CD4-positive, alpha-beta T cell (primary cell): ENCODE measurements at regions of chr19 and their contacts with region 1.

Region 1: GRCh38 chr19:14772467-14772866 is 5.9 kb downstream of the ADGRE2 start:
- DNase-seq: no peak
- ATAC-seq: no peak
- H3K4me3 ChIP-seq: no peak overlapping the region
- H3K4me3 Mint-ChIP-seq: no peak overlapping the region
- H3K27ac ChIP-seq: no peak overlapping the region
- H3K27ac Mint-ChIP-seq: no peak overlapping the region
- H3K4me1 ChIP-seq: peaks cover 17% of the 10 kb centered on the region
- H3K4me1 Mint-ChIP-seq: peaks cover 12% of the 10 kb centered on the region
- H3K27me3 ChIP-seq: peaks cover 18 to 22% of the 10 kb centered on the region in 2 experiments
- H3K27me3 Mint-ChIP-seq: peaks cover 40% of the 10 kb centered on the region
- CTCF ChIP-seq: no peak

Region 2: GRCh38 chr19:14821937-14822336 is 49.5 kb after region 1 on chr19:
- CTCF ChIA-PET with region 1: no interaction called
- POLR2A ChIA-PET with region 1: no interaction called
- intact Hi-C with region 1: loop called in 1 of 2 experiments (anchors 2 kb)
- DNase-seq: no peak
- ATAC-seq: no peak
- H3K4me3 ChIP-seq: no peak overlapping the region
- H3K4me3 Mint-ChIP-seq: no peak overlapping the region
- H3K27ac ChIP-seq: no peak overlapping the region
- H3K27ac Mint-ChIP-seq: no peak overlapping the region
- H3K4me1 ChIP-seq: no peaks in the 10 kb centered on the region
- H3K4me1 Mint-ChIP-seq: no peaks in the 10 kb centered on the region
- H3K27me3 ChIP-seq: peaks cover 7 to 18% of the 10 kb centered on the region in 2 experiments
- H3K27me3 Mint-ChIP-seq: peaks cover 55% of the 10 kb centered on the region
- CTCF ChIP-seq: no peak